ENCODE measurements at regions of chr1 and their contacts with region 1.

Region 1: DNA sequence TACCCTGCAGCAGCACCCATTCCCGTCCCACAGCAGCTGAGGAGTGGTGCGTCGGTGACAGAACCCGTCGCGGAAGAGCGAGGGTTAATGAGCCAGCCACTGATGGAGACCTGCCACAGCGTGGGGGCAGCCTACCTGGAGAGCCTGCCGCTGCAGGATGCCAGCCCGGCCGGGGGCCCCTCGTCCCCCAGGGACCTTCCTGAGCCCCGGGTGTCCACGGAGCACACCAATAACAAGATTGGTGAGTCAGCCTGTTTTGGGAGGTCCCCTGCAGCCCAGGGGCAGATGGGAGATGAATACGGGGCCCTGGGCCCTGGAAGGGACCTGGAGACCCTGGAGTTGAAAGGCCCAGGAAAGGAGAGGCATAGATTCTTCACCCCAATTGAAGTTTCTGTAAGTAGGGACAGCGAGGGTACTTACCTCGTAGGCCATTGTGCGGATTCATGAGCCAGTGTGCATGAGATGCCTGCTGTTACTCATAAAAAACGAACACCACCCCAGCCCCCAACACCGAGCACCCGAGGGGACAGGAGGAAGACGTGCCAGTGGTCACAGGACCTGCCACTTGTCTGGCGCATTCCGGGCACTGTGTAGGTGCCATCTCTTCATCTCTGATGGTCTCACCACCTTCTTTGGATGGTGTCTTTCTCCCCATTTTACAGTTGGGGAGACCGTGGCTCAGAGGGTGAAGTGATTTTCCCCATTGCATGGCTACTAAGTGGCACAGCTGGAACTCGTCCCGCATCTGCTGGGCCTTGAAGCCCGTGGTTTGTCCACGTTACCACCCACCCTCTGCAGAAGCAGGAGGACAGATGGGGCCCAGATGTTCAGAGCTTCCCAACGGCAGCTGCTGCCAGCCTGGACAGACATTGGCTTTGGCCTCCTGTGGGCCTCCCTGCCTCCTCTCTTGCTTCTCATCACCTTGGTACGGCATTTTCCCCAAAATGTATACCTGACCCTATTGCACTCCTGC is 28.3 kb upstream of the TNFRSF1B start:
- DNase-seq: no peak
- H3K4me3 ChIP-seq: no peak overlapping the region
- H3K27ac ChIP-seq: no peak overlapping the region
- H3K4me1 ChIP-seq: peaks cover 5% of the 10 kb centered on the region
- CTCF ChIP-seq: no peak

Region 2: DNA sequence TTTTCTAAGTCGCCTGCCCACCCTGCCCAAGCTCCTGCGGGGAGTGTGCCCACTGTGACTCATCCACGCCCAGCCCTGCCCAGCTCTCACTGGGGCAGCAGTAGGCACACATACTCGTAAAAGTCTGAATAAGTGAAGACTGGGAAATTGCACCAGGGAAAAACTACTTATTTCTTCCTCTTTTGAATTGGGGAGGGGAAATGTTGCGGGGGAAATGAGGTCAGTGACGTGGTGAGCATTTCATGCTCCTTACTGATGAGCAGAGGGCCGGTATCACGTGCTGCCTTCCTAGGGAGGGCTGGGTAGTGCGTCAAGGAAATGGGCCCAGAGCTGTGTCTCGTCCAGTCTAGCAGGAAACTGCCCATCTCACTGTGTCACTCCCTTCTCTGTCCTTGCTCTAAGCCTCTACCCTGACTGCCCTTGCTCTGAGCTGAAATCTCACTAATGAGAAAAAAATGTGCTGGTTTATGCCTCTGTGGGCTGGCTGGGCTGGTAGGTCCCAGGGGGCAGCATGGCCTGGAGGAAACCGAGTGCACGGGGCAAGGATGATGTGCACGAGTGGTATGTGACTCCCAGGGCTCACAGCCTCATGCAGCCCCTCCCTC is 14.8 kb after region 1 on chr1:
- CTCF ChIA-PET with region 1: no interaction called
- POLR2A ChIA-PET with region 1: interaction called, 22 read pairs
- intact Hi-C with region 1: no loop called
- DNase-seq: peak; percentile 35
- H3K4me3 ChIP-seq: no peak overlapping the region
- H3K27ac ChIP-seq: peak overlapping the region; percentile 85
- H3K4me1 ChIP-seq: peaks cover 68% of the 10 kb centered on the region
- CTCF ChIP-seq: no peak

Region 3: GRCh38 chr1:12285496-12286143 is 147.1 kb after region 1 on chr1:
- CTCF ChIA-PET with region 1: no interaction called
- POLR2A ChIA-PET with region 1: no interaction called
- intact Hi-C with region 1: no loop called
- DNase-seq: no peak
- H3K4me3 ChIP-seq: no peak overlapping the region
- H3K27ac ChIP-seq: no peak overlapping the region
- H3K4me1 ChIP-seq: no peaks in the 10 kb centered on the region
- CTCF ChIP-seq: no peak